Endothelial cell of umbilical vein (primary cell): ENCODE measurements at regions of chr12 and their contacts with region 1.

Region 1: GRCh38 chr12:117367011-117367638 is 5.7 kb upstream of the NOS1 start:
- DNase-seq: peak; percentile 79
- H3K4me3 ChIP-seq: no peak overlapping the region
- H3K27ac ChIP-seq: no peak overlapping the region
- H3K4me1 ChIP-seq: no peaks in the 10 kb centered on the region
- H3K27me3 ChIP-seq: peaks cover 14 to 17% of the 10 kb centered on the region in 2 experiments
- CTCF ChIP-seq: peak; percentile 82 to 87
- POLR2A ChIP-seq: no peak

Region 2: DNA sequence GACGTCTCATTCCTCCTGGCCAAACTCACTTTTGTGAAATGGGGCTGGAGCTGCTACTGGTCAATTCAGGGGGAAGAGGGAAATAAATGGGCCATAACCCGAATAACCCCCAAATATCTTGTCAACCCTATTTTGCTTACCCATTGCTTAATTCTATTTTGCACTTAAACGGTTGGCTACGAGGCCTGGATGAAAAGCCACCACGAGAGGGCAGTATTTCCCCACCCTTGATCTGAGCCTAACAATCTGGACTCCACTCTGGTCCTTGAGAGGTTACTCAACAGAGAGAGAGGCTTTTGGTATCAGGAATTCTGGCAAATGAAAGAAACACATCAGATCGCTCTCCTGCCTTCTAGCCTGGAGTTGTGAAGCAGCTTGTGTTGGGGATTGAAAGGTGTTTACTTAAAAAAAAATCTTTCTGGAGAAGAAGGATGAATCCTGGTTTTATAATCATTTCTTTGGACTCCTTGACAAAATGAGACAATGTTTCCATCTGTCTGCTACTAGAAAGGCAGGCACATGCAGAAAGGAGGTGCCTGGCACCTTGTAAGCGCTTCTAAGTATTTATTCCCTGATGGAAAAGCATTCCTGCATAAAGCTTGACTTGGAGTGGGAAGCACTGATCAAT is 154.4 kb before region 1 on chr12:
- CTCF ChIA-PET with region 1: interaction called, 4 read pairs
- POLR2A ChIA-PET with region 1: no interaction called
- dilution Hi-C with region 1: no loop called
- intact Hi-C with region 1: loop called (anchors 2 kb)
- DNase-seq: peak; percentile 70
- H3K4me3 ChIP-seq: no peak overlapping the region
- H3K27ac ChIP-seq: no peak overlapping the region
- H3K4me1 ChIP-seq: no peaks in the 10 kb centered on the region
- H3K27me3 ChIP-seq: peaks cover 0 to 2% of the 10 kb centered on the region in 2 experiments
- CTCF ChIP-seq: peak; percentile 82 to 86
- POLR2A ChIP-seq: no peak

Region 3: GRCh38 chr12:117356048-117356447 is 11.1 kb before region 1 on chr12:
- CTCF ChIA-PET with region 1: interaction called, 16 read pairs
- POLR2A ChIA-PET with region 1: no interaction called
- dilution Hi-C with region 1: no loop called
- intact Hi-C with region 1: no loop called
- DNase-seq: no peak
- H3K4me3 ChIP-seq: no peak overlapping the region
- H3K27ac ChIP-seq: no peak overlapping the region
- H3K4me1 ChIP-seq: no peaks in the 10 kb centered on the region
- H3K27me3 ChIP-seq: peaks cover 21 to 37% of the 10 kb centered on the region in 2 experiments
- CTCF ChIP-seq: no peak
- POLR2A ChIP-seq: no peak

Region 4: DNA sequence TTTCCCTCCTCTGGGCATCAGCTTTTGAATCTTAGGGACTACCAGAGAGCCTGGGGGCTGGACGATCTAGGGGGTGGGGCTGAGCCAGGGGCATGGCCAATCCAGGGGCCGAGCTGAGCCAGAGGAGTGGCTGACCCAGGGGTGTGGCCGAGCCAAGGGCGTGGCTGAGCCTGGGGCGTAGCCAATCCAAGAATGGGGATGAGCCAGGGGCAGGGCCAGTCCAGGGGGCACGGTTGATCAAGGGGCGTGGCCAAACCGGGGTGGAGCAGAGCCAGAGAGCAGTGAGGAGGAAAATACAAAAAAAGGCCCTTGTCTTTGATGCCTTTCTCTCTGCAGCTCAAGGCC is 213.6 kb after region 1 on chr12:
- CTCF ChIA-PET with region 1: interaction called, 241 read pairs
- POLR2A ChIA-PET with region 1: no interaction called
- dilution Hi-C with region 1: no loop called
- intact Hi-C with region 1: no loop called
- DNase-seq: no peak
- H3K4me3 ChIP-seq: no peak overlapping the region
- H3K27ac ChIP-seq: no peak overlapping the region
- H3K4me1 ChIP-seq: no peaks in the 10 kb centered on the region
- H3K27me3 ChIP-seq: no peaks in the 10 kb centered on the region
- CTCF ChIP-seq: no peak
- POLR2A ChIP-seq: no peak

Region 5: DNA sequence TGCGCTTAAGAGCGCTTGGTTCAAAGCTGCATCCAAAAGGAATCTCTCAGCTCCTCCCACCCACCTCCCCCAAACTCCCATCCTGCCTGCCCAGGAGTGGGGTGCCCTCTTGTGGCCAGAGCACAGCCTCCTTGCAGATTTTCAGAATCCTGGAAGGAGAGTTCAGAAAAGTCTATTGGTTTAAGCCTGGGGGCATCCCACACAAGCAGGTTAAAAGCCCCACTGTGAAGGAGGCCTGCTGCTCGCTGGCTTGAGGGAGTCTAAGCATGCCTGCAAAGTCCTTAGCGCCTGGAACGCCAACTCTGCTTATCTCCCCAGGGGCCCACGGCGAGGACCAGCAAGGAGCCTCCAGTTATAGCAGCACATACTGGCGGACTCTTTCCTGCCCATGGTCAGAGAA is 304.6 kb after region 1 on chr12:
- CTCF ChIA-PET with region 1: interaction called, 19 read pairs
- POLR2A ChIA-PET with region 1: no interaction called
- dilution Hi-C with region 1: no loop called
- intact Hi-C with region 1: loop called (anchors 1 kb)
- DNase-seq: peak; percentile 44
- H3K4me3 ChIP-seq: no peak overlapping the region
- H3K27ac ChIP-seq: no peak overlapping the region
- H3K4me1 ChIP-seq: peaks cover 33% of the 10 kb centered on the region
- H3K27me3 ChIP-seq: no peaks in the 10 kb centered on the region
- CTCF ChIP-seq: peak; percentile 39 to 67
- POLR2A ChIP-seq: no peak

Region 6: DNA sequence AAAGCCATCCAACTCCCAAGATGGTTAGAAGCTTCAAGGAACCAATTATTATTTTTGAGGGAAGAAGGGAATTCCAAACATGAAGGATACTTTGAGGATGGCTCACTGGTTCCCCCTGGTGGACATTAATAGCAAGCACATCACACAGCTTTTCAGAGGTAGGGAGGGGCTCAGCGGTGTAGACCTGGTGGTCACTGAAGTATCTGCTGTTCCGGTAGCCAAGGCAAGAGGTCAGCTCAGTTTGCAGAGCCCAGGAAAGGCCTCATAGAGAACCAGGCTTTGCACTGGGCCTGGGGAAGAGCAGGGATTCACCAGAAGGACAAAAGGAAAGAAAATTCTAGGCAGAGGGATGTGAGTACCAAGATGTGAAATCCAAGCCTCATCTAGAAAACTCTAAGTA is 482.9 kb after region 1 on chr12:
- CTCF ChIA-PET with region 1: interaction called, 219 read pairs
- POLR2A ChIA-PET with region 1: no interaction called
- dilution Hi-C with region 1: loop called (anchors 25 kb)
- intact Hi-C with region 1: loop called (anchors 1 kb)
- DNase-seq: peak; percentile 54
- H3K4me3 ChIP-seq: no peak overlapping the region
- H3K27ac ChIP-seq: no peak overlapping the region
- H3K4me1 ChIP-seq: no peaks in the 10 kb centered on the region
- H3K27me3 ChIP-seq: peaks cover 6% of the 10 kb centered on the region in 2 experiments
- CTCF ChIP-seq: peak; percentile 86 to 88
- POLR2A ChIP-seq: no peak